Heart right ventricle (tissue), 16 donors: ENCODE measurements at regions of chr15 and their contacts with region 1.

Region 1: DNA sequence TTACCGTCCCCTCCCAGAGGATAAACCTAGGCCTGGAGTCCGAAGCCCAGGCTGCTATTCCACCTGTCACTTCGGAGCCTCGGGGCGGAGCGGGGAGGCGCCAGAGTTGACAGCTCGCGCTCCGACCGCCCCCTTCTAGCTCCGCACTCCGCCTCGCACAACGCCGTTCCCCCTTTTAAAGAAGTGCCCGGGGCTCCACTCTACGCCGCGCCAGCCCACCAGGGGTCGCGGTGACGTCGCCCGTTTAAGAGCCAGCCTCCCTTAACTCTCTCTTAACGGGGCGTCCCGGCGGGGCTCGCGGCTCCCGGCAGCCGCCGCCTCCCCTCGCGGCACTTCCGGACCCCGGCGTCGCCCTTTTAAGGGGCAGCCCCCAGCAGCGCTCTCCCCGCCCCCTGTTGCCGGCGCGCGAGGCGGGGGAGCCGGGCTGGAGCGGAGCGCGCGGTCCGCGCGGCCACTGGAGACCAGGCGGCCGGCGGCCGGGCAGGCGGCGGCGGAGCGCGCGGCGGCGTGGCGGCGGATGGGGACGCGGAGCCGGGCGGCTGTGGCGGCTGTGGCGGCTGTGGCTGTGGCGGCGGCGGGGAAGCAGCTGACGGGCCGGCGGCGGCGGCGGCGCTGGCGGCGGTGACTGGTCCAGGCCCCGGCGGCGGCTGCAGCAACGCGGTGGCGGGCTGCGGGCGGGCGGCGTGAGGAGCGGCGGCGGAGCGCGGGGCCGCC is at the start of gene INAFM2:
- DNase-seq: peak; percentile 90 to 94
- ATAC-seq: peak; percentile 90 to 93 (median 92)
- H3K4me3 ChIP-seq: peak within 1 kb of the TSS; percentile 63 to 93 (median 82)
- H3K27ac ChIP-seq: peak within 1 kb of the TSS; percentile 78 to 94 (median 90)
- H3K4me1 ChIP-seq: peaks cover 7 to 54% (median 42%) of the 10 kb centered on the region in 9 donors
- H3K27me3 ChIP-seq: no peaks in the 10 kb centered on the region
- CTCF ChIP-seq: peak; percentile 68 to 86 (median 77)
- total RNA-seq, gene INAFM2: 32.5 to 63.9 (median 40.9) TPM

Region 2: DNA sequence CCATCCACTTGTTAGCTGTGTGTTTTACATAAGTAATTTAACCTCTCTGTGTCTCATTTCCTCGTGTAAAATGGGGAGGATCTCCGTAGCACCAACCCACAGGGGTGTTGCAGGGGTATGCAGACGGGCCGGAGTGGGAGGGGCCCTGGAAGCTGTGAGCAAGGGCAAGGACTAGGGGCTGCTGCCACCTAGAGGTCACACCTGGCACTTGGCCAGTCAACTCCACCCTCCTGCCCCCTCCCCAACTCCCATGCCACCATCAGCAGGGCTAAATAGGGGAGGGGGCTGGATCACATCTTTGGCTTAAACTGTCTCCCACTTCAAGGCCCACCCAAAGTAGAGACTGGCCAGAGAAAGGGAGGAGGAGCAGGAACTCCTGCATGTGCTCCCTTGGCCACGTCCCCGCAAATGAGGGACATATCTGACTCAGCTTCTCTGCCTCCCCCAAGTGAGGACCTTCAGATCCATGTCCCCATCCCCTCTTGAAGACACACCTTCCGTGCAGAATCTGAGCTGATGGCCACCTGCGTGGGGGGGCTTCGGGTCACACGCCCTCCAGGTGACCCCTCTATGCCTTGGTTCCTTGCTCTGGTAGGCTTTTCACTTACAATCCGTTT is 14.8 kb after region 1 on chr15:
- intact Hi-C with region 1: loop called in 5 of 10 experiments (anchors 1 to 2 kb)
- DNase-seq: peak; percentile 78
- ATAC-seq: peak in 6 of 8 donors; percentile 20 to 39 (median 30)
- H3K4me3 ChIP-seq: peak overlapping the region in 8 of 10 donors; percentile 47 to 57 (median 50)
- H3K27ac ChIP-seq: peak overlapping the region in 9 of 10 donors; percentile 95 to 99 (median 98)
- H3K4me1 ChIP-seq: peaks cover 63 to 100% (median 96%) of the 10 kb centered on the region in 9 donors
- H3K27me3 ChIP-seq: no peaks in the 10 kb centered on the region
- CTCF ChIP-seq: peak; percentile 48 to 87 (median 76)

Region 3: DNA sequence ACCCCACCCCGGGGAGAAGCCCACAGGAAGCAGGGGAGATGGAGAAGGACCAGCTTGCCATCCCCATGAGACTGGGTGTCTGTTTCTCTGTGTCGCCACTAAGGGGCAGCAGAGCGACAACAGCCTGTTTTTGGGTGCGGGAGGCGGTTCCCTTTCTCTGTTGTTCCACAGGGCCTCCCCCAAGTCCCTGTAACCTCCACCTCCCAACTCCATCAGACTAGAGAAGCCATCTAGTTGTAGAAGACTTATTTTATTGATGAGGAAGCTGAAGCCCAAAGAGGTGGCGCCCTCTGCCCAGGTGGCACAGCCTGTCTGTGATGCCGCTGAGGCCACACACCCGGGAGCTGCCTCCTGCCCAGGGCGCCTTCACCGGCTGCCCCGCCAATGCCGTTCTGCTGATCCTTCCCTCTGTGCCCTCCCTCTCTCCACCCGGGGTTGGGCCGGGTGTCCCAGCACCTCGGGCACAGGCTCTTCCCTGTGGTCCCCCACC is 21.3 kb after region 1 on chr15:
- intact Hi-C with region 1: loop called in 5 of 10 experiments (anchors 1 to 2 kb)
- DNase-seq: peak; percentile 61 to 68
- ATAC-seq: peak in 1 of 8 donors; percentile 18
- H3K4me3 ChIP-seq: no peak overlapping the region
- H3K27ac ChIP-seq: peak overlapping the region in 5 of 10 donors; percentile 9 to 99 (median 72)
- H3K4me1 ChIP-seq: peaks cover 24 to 64% (median 50%) of the 10 kb centered on the region in 9 donors
- H3K27me3 ChIP-seq: no peaks in the 10 kb centered on the region
- CTCF ChIP-seq: peak; percentile 58 to 85 (median 82)

Region 4: DNA sequence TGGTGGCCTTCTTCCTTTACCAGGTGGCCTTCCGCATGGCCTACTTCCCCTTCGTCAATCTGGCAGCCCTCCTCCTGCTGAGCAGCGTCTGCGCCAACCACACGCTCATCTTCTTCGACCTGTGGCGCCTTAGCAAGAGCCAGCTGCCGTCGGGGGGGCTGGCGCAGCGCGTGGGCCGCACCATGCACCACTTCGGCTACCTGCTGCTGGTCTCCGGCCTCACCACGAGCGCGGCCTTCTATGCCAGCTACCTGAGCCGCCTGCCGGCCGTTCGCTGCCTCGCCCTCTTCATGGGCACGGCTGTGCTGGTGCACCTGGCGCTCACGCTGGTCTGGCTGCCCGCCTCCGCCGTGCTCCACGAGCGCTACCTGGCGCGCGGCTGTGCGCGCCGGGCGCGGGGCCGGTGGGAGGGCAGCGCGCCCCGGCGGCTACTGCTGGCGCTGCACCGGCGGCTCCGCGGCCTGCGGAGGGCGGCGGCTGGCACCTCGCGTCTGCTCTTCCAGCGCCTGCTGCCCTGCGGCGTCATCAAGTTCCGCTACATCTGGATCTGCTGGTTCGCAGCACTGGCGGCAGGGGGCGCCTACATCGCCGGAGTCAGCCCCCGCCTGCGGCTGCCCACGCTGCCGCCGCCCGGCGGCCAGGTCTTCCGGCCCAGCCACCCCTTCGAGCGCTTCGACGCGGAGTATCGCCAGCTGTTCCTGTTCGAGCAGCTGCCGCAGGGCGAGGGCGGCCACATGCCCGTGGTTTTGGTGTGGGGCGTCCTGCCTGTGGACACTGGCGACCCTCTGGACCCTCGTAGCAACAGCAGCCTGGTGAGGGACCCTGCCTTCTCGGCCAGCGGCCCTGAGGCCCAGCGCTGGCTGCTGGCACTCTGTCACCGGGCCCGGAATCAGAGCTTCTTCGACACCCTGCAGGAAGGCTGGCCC is 44.6 kb after region 1 on chr15:
- intact Hi-C with region 1: loop called in 2 of 10 experiments (anchors 5 to 10 kb)
- DNase-seq: peak; percentile 79 to 84
- ATAC-seq: peak; percentile 60 to 79 (median 68)
- H3K4me3 ChIP-seq: peak overlapping the region in 9 of 10 donors; percentile 12 to 57 (median 38)
- H3K27ac ChIP-seq: peak overlapping the region; percentile 60 to 91 (median 85)
- H3K4me1 ChIP-seq: peaks cover 3 to 38% (median 29%) of the 10 kb centered on the region in 9 donors
- H3K27me3 ChIP-seq: no peaks in the 10 kb centered on the region
- CTCF ChIP-seq: peak; percentile 75 to 93 (median 88)

Region 5: GRCh38 chr15:40382580-40383456 is 59.4 kb after region 1 on chr15 and contains the start of gene KNSTRN:
- intact Hi-C with region 1: loop called in 1 of 10 experiments (anchors 10 kb)
- DNase-seq: peak; percentile 88 to 94
- ATAC-seq: peak; percentile 96 to 99 (median 98)
- H3K4me3 ChIP-seq: peak within 1 kb of the TSS; percentile 59 to 96 (median 85)
- H3K27ac ChIP-seq: peak within 1 kb of the TSS in 8 of 10 donors; percentile 30 to 82 (median 48)
- H3K4me1 ChIP-seq: peaks cover 0 to 37% (median 21%) of the 10 kb centered on the region in 9 donors
- H3K27me3 ChIP-seq: no peaks in the 10 kb centered on the region
- CTCF ChIP-seq: no peak
- total RNA-seq, gene KNSTRN: 5.3 to 16.0 (median 8.3) TPM